ENCODE measurements at regions of chr9 and their contacts with region 1.

Region 1: GRCh38 chr9:20929276-20929675 is 102.2 kb downstream of the HACD4 start:
- DNase-seq: no peak
- H3K4me3 Mint-ChIP-seq: no peak overlapping the region
- H3K27ac Mint-ChIP-seq: no peak overlapping the region
- H3K4me1 Mint-ChIP-seq: peaks cover 25% of the 10 kb centered on the region
- H3K27me3 Mint-ChIP-seq: no peaks in the 10 kb centered on the region

Region 2: DNA sequence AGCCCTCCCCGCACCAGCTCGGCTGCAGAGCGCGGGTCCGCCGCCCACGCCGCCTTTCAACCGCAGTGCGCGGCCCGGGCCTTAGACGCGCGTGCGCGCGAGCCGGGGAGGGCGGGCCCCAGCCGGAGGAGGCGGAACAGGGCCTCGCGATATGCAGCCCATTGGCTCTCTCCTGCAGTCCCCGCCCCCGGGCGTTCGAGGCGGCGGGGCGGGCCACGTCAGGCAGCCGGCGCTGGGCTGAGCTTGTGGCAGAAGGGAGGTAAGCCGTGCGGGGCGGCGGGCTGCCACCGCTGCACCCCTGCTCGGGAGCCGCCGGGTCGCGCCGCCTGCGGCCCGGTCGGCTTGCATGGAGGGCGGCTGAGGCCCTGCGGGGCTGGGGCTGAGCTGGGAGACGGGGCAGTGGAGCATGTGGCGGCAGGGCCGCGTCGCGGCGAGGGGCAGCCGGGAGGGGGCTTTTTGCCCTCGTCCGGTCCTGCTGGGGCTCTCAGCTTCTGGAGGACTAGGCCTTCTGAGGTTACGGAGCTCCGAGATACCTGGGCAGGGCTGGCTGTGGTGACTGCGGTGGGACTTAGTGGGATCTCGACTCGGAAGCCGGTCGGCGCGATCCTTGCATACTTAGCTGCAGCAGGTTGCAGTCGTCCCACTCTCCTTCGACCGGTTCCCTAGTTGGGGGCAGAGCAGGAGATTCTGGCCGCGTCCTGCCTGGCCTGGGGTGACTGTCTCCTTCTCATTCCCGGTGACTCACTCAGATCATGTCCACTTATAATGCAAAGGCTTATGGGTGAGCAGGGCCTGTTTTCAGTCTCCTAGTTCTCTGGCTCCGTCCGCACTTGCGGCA is 245.0 kb before region 1 on chr9 and contains the start of gene FOCAD:
- intact Hi-C with region 1: loop called (anchors 5 kb)
- DNase-seq: peak; percentile 96
- H3K4me3 Mint-ChIP-seq: peak within 1 kb of the TSS; percentile 87
- H3K27ac Mint-ChIP-seq: peak within 1 kb of the TSS; percentile 82
- H3K4me1 Mint-ChIP-seq: peaks cover 21% of the 10 kb centered on the region
- H3K27me3 Mint-ChIP-seq: no peaks in the 10 kb centered on the region
- total RNA-seq, gene FOCAD: 32.2 and 36.0 TPM in 2 replicates

Region 3: DNA sequence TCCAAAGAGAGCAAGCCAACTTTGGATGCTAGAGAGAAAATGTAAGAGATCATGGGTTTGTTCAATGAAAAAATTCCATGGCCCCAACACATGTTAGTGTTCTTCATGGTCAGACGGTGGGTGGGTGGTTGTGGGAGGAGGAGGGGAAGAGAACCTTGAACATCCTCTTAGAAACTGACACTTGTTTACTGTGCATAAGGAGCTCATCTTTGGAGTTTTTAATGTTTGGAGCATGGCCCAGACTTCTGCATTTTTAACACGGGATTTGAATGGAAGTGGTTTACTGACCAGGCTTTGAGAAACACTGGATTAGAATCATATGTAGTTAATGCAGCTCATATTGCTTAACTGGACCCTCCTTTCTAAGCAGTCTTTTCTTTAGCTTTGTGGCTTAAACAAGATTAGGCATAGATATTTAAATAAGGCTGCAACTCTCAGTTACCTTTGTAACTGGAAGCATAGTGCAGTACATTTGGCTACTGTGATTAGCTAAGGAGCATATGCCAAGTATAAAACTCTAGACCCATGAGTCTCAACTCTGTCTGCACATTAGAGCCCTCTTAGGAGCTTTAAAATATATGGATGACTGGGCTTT is 185.1 kb before region 1 on chr9:
- intact Hi-C with region 1: loop called (anchors 10 kb)
- DNase-seq: no peak
- H3K4me3 Mint-ChIP-seq: no peak overlapping the region
- H3K27ac Mint-ChIP-seq: no peak overlapping the region
- H3K4me1 Mint-ChIP-seq: peaks cover 13% of the 10 kb centered on the region
- H3K27me3 Mint-ChIP-seq: no peaks in the 10 kb centered on the region

Region 4: GRCh38 chr9:20997503-20998076 is 68.3 kb after region 1 on chr9:
- intact Hi-C with region 1: no loop called
- DNase-seq: no peak
- H3K4me3 Mint-ChIP-seq: no peak overlapping the region
- H3K27ac Mint-ChIP-seq: no peak overlapping the region
- H3K4me1 Mint-ChIP-seq: peaks cover 39% of the 10 kb centered on the region
- H3K27me3 Mint-ChIP-seq: no peaks in the 10 kb centered on the region